PC-9 (cell line): ENCODE measurements at regions of chr1 and their contacts with region 1.

Region 1: GRCh38 chr1:67832737-67833601 is at the start of gene GNG12:
- DNase-seq: peak; percentile 67 to 85
- H3K4me3 ChIP-seq: peak within 1 kb of the TSS; percentile 92
- H3K27ac ChIP-seq: peak within 1 kb of the TSS; percentile 82
- H3K4me1 ChIP-seq: peaks cover 20% of the 10 kb centered on the region
- H3K27me3 ChIP-seq: no peaks in the 10 kb centered on the region
- CTCF ChIP-seq: no peak
- total RNA-seq, gene GNG12: 69.9 and 102 TPM in 2 replicates

Region 2: GRCh38 chr1:67430352-67431155 is 402.4 kb before region 1 on chr1 and contains the start of gene SERBP1:
- CTCF ChIA-PET with region 1: no interaction called
- POLR2A ChIA-PET with region 1: interaction called, 7 read pairs
- intact Hi-C with region 1: loop called (anchors 10 kb)
- DNase-seq: peak; percentile 93 to 97
- H3K4me3 ChIP-seq: peak within 1 kb of the TSS; percentile 78
- H3K27ac ChIP-seq: peak within 1 kb of the TSS; percentile 88
- H3K4me1 ChIP-seq: peaks cover 34% of the 10 kb centered on the region
- H3K27me3 ChIP-seq: no peaks in the 10 kb centered on the region
- CTCF ChIP-seq: 0 out of 2 replicates have a peak, but pooled peaks have one; percentile 11
- total RNA-seq, gene SERBP1: 312 and 339 TPM in 2 replicates

Region 3: GRCh38 chr1:67766141-67766978 is 66.6 kb before region 1 on chr1:
- CTCF ChIA-PET with region 1: interaction called, 39 read pairs
- POLR2A ChIA-PET with region 1: interaction called, 4 read pairs
- intact Hi-C with region 1: loop called (anchors 2 kb)
- DNase-seq: peak in 1 of 2 experiments; percentile 44
- H3K4me3 ChIP-seq: no peak overlapping the region
- H3K27ac ChIP-seq: no peak overlapping the region
- H3K4me1 ChIP-seq: no peaks in the 10 kb centered on the region
- H3K27me3 ChIP-seq: no peaks in the 10 kb centered on the region
- CTCF ChIP-seq: peak; percentile 99

Region 4: DNA sequence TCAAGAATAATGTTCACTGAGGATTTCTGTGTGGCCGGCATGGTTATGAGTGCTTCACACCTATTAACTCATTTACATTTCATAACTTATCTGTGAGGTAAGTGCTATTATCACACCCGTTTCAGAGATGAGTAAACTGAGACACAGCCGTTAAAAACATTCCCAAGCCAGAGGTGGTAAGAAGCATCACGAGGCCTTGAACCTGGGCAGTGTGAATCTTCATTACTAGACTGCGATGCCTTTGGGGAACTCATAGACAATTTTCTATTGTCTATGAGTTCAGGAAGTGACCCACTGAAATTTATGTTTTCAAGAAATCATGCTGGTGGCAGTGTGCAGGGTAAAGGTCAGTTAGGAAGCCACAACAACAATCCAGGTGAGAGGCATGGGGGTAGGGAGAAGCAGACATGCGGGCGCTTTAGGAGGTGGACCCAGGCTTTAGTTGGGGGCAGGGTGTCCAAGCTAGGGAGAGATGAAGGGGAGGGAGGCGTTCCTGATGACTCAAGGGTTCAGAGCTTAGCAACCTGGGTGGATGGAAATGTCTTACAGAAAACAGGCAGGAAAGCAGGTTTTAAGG is 14.2 kb before region 1 on chr1:
- CTCF ChIA-PET with region 1: interaction called, 3 read pairs
- POLR2A ChIA-PET with region 1: interaction called, 4 read pairs
- intact Hi-C with region 1: loop called (anchors 2 kb)
- DNase-seq: peak; percentile 68 to 76
- H3K4me3 ChIP-seq: no peak overlapping the region
- H3K27ac ChIP-seq: no peak overlapping the region
- H3K4me1 ChIP-seq: peaks cover 28% of the 10 kb centered on the region
- H3K27me3 ChIP-seq: no peaks in the 10 kb centered on the region
- CTCF ChIP-seq: no peak

Region 5: DNA sequence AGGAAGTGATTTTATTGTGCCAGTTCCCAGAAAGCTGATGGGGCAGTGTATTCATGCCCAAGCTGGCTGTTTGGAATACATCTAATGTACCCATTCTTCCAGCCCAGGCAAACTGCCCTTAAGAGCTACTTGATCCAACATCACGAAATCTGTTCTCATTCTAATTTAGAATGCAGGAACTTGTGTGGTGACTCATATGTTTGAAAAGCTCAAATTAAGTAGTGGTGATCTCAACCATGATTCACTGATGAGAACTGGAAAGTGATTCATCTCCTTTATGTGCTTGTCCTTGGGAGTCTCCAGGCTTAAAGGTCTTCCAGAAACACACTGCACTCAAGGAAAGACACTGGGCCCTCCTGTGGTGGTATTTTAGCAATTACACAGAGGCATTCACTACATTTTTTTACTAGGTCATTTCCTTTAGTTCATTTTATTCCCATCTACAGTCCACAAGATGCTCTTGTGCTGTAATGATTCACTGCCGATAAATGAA is 551.4 kb after region 1 on chr1:
- CTCF ChIA-PET with region 1: no interaction called
- POLR2A ChIA-PET with region 1: no interaction called
- intact Hi-C with region 1: loop called (anchors 10 kb)
- DNase-seq: peak; percentile 63 to 99
- H3K4me3 ChIP-seq: no peak overlapping the region
- H3K27ac ChIP-seq: peak overlapping the region; percentile 79
- H3K4me1 ChIP-seq: peaks cover 25% of the 10 kb centered on the region
- H3K27me3 ChIP-seq: no peaks in the 10 kb centered on the region
- CTCF ChIP-seq: peak; percentile 72